Activated CD4-positive, alpha-beta memory T cell treated with anti-CD3 and anti-CD28 coated beads for 36 hours (primary cell): ENCODE measurements at regions of chr6 and their contacts with region 1.

Region 1: DNA sequence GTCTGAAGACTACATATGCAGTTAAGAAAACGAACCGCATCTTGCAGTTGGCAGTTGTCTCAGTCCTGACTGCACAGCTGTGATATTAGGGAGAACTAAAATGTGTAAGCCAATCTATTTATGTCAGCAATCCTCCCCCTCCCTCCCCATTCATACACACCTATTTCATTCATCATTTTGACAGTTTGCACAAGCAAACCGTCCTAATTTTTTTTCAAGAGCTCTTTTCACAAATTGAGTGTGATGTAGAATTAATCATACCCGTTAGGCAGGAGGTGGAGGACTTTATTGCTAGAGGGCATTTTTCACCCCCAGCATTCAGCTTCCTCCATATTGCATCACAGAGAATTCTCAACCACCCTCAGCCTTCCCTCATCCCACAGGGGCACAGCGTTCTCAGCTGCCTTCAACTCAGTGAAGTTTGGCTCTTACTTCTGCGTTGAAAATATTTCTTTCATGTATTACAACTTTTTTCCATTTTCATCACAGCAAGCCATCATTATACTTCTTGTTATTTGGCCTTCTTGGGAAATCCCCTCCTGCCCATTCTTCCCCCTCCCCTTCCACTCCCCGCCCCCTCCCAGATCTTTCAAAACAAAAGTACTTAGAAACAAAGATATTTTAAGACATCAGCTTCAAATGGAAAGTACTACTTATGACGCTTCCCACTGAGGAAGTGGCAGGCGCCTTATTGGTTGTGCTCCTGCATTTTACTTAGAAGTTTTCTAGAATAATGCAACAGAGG is 37.5 kb downstream of the NOX3 start:
- DNase-seq: peak; percentile 87
- H3K4me3 Mint-ChIP-seq: peak overlapping the region; percentile 38
- H3K27ac Mint-ChIP-seq: peak overlapping the region; percentile 98
- H3K4me1 Mint-ChIP-seq: peaks cover 55% of the 10 kb centered on the region
- H3K27me3 Mint-ChIP-seq: no peaks in the 10 kb centered on the region

Region 2: GRCh38 chr6:154247119-154247861 is 1170.9 kb before region 1 on chr6:
- CTCF ChIA-PET with region 1: no interaction called
- POLR2A ChIA-PET with region 1: no interaction called
- intact Hi-C with region 1: loop called (anchors 10 kb)
- DNase-seq: peak; percentile 55
- H3K4me3 Mint-ChIP-seq: peak overlapping the region; percentile 87
- H3K27ac Mint-ChIP-seq: peak overlapping the region; percentile 79
- H3K4me1 Mint-ChIP-seq: peaks cover 80% of the 10 kb centered on the region
- H3K27me3 Mint-ChIP-seq: no peaks in the 10 kb centered on the region

Region 3: GRCh38 chr6:155050311-155050710 is 367.9 kb before region 1 on chr6:
- CTCF ChIA-PET with region 1: no interaction called
- POLR2A ChIA-PET with region 1: no interaction called
- intact Hi-C with region 1: loop called (anchors 1 kb)
- DNase-seq: peak; percentile 62
- H3K4me3 Mint-ChIP-seq: peak overlapping the region; percentile 14
- H3K27ac Mint-ChIP-seq: peak overlapping the region; percentile 85
- H3K4me1 Mint-ChIP-seq: peaks cover 25% of the 10 kb centered on the region
- H3K27me3 Mint-ChIP-seq: no peaks in the 10 kb centered on the region

Region 4: GRCh38 chr6:155333414-155333813 is 84.8 kb before region 1 on chr6:
- CTCF ChIA-PET with region 1: no interaction called
- POLR2A ChIA-PET with region 1: no interaction called
- intact Hi-C with region 1: loop called (anchors 2 kb)
- DNase-seq: peak; percentile 39
- H3K4me3 Mint-ChIP-seq: peak overlapping the region; percentile 33
- H3K27ac Mint-ChIP-seq: peak overlapping the region; percentile 76
- H3K4me1 Mint-ChIP-seq: peaks cover 28% of the 10 kb centered on the region
- H3K27me3 Mint-ChIP-seq: no peaks in the 10 kb centered on the region

Region 5: DNA sequence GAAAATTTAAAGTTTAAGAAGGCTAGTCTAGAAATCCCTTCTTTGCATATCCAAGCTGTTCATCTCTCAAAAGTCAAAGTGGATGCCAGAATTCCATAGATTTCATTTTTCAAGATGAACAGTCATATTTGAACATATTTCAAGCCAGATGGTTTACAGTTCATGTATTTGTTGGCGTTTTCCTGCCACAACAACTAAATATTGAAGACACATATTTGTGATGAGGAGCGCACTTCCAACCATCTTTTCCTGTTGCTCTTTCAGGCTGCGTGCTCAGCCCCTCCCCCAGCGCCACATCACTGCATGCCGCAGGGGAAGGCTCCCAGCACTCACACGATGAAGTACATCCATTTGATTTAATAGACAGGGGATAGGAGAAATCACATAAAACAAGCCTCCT is 43.4 kb after region 1 on chr6:
- CTCF ChIA-PET with region 1: no interaction called
- POLR2A ChIA-PET with region 1: no interaction called
- intact Hi-C with region 1: no loop called
- DNase-seq: no peak
- H3K4me3 Mint-ChIP-seq: no peak overlapping the region
- H3K27ac Mint-ChIP-seq: no peak overlapping the region
- H3K4me1 Mint-ChIP-seq: peaks cover 20% of the 10 kb centered on the region
- H3K27me3 Mint-ChIP-seq: peaks cover 4% of the 10 kb centered on the region

Region 6: GRCh38 chr6:155510879-155511278 is 92.7 kb after region 1 on chr6:
- CTCF ChIA-PET with region 1: no interaction called
- POLR2A ChIA-PET with region 1: no interaction called
- intact Hi-C with region 1: loop called (anchors 1 kb)
- DNase-seq: no peak
- H3K4me3 Mint-ChIP-seq: no peak overlapping the region
- H3K27ac Mint-ChIP-seq: peak overlapping the region; percentile 60
- H3K4me1 Mint-ChIP-seq: peaks cover 19% of the 10 kb centered on the region
- H3K27me3 Mint-ChIP-seq: peaks cover 5% of the 10 kb centered on the region

Region 7: DNA sequence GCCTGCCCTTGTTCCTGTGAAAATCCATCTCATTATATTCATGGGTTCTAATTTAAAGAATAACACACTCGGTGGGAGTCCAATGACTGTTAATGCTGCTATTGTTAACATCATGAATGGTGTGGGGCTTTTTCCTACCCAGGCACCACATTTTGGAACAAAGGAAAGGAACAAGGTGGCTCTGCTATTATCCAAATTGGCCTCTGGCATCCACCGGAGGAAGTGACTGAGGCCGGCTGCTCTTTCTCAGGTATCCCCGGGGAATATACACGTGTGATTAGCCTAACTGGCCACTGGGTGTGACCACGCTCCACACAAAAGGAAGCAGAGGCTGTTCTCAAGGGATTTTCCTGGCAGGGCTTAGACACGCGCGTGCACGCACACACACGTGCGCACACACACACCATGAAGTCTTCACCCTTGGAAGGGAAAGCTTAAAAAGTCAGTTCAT is 757.8 kb after region 1 on chr6:
- CTCF ChIA-PET with region 1: no interaction called
- POLR2A ChIA-PET with region 1: no interaction called
- intact Hi-C with region 1: loop called (anchors 10 kb)
- DNase-seq: no peak
- H3K4me3 Mint-ChIP-seq: no peak overlapping the region
- H3K27ac Mint-ChIP-seq: peak overlapping the region; percentile 35
- H3K4me1 Mint-ChIP-seq: peaks cover 24% of the 10 kb centered on the region
- H3K27me3 Mint-ChIP-seq: no peaks in the 10 kb centered on the region